BJ (cell line): ENCODE measurements at regions of chr7 and their contacts with region 1.

Region 1: GRCh38 chr7:100889761-100890634 is 483 bp upstream of the UFSP1 start:
- DNase-seq: peak; percentile 51
- H3K4me3 ChIP-seq: peak overlapping the region; percentile 46
- H3K27me3 ChIP-seq: no peaks in the 10 kb centered on the region
- CTCF ChIP-seq: peak; percentile 8; the same call in 1 of the 2 replicates

Region 2: DNA sequence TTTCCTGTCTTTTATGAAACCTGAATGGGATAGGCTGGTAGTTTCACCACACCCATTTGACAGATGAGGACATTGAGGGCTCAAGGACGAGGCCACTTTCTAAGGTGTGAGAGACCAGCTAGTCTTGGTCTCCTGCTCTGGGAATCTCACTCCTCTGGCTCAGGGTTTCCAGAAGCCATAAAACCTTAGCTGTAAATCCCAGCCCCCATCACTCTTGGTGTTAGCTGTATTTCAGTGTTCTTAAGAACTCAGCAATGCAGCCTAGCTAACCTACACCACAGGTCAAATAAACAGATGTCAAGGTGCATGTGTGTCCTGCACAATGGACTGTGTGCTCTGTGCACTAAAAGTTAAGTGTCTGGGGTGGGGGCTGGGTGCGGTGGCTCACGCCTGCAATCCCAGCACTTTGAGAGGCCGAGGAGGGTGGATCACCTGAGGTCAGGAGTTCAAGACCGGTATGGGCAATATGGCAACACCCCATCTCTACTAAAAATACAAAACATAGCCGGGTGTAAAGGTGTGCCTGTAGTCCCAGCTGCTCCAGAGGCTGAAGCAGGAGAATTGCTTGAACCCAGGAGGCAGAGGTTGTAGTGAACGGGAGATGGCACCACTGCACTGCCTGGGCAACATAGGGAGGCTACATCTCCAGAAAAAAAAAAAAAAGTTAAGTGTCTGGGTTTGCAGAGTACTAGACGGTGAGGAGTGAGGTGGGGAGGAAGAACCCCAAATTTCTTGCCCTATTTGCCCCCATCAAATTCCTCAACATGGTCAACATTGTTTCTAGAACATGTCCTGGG is 170.3 kb before region 1 on chr7:
- CTCF ChIA-PET with region 1: no interaction called
- POLR2A ChIA-PET with region 1: no interaction called
- DNase-seq: no peak
- H3K4me3 ChIP-seq: no peak overlapping the region
- H3K27me3 ChIP-seq: peaks cover 38% of the 10 kb centered on the region
- CTCF ChIP-seq: peak; percentile 60

Region 3: GRCh38 chr7:100763556-100764140 is 126.3 kb before region 1 on chr7:
- CTCF ChIA-PET with region 1: no interaction called
- POLR2A ChIA-PET with region 1: no interaction called
- DNase-seq: no peak
- H3K4me3 ChIP-seq: no peak overlapping the region
- H3K27me3 ChIP-seq: peaks cover 15% of the 10 kb centered on the region
- CTCF ChIP-seq: no peak

Region 4: GRCh38 chr7:100874577-100875355 is 15.2 kb before region 1 on chr7 and contains the start of gene SRRT:
- CTCF ChIA-PET with region 1: interaction called, 11 read pairs
- POLR2A ChIA-PET with region 1: interaction called, 13 read pairs
- DNase-seq: peak; percentile 79
- H3K4me3 ChIP-seq: peak within 1 kb of the TSS; percentile 80
- H3K27me3 ChIP-seq: no peaks in the 10 kb centered on the region
- CTCF ChIP-seq: peak; percentile 39
- polyA plus RNA-seq, gene SRRT: 37.4 and 47.1 TPM in 2 replicates

Region 5: GRCh38 chr7:100983451-100984187 is 93.6 kb after region 1 on chr7:
- CTCF ChIA-PET with region 1: no interaction called
- POLR2A ChIA-PET with region 1: no interaction called
- DNase-seq: peak; percentile 71
- H3K4me3 ChIP-seq: no peak overlapping the region
- H3K27me3 ChIP-seq: peaks cover 2% of the 10 kb centered on the region; the same call in 1 of the 2 replicates
- CTCF ChIP-seq: no peak

Region 6: GRCh38 chr7:101015626-101016025 is 125.6 kb after region 1 on chr7:
- CTCF ChIA-PET with region 1: no interaction called
- POLR2A ChIA-PET with region 1: no interaction called
- DNase-seq: no peak
- H3K4me3 ChIP-seq: no peak overlapping the region
- H3K27me3 ChIP-seq: no peaks in the 10 kb centered on the region
- CTCF ChIP-seq: no peak

Region 7: GRCh38 chr7:101058355-101058754 is 168.4 kb after region 1 on chr7:
- CTCF ChIA-PET with region 1: interaction called, 40 read pairs
- POLR2A ChIA-PET with region 1: no interaction called
- DNase-seq: no peak
- H3K4me3 ChIP-seq: no peak overlapping the region
- H3K27me3 ChIP-seq: peaks cover 8% of the 10 kb centered on the region
- CTCF ChIP-seq: no peak

Region 8: GRCh38 chr7:101077303-101078089 is 187.5 kb after region 1 on chr7:
- CTCF ChIA-PET with region 1: interaction called, 16 read pairs
- POLR2A ChIA-PET with region 1: no interaction called
- DNase-seq: no peak
- H3K4me3 ChIP-seq: no peak overlapping the region
- H3K27me3 ChIP-seq: no peaks in the 10 kb centered on the region; the same call in 1 of the 2 replicates
- CTCF ChIP-seq: peak; percentile 98

Region 9: DNA sequence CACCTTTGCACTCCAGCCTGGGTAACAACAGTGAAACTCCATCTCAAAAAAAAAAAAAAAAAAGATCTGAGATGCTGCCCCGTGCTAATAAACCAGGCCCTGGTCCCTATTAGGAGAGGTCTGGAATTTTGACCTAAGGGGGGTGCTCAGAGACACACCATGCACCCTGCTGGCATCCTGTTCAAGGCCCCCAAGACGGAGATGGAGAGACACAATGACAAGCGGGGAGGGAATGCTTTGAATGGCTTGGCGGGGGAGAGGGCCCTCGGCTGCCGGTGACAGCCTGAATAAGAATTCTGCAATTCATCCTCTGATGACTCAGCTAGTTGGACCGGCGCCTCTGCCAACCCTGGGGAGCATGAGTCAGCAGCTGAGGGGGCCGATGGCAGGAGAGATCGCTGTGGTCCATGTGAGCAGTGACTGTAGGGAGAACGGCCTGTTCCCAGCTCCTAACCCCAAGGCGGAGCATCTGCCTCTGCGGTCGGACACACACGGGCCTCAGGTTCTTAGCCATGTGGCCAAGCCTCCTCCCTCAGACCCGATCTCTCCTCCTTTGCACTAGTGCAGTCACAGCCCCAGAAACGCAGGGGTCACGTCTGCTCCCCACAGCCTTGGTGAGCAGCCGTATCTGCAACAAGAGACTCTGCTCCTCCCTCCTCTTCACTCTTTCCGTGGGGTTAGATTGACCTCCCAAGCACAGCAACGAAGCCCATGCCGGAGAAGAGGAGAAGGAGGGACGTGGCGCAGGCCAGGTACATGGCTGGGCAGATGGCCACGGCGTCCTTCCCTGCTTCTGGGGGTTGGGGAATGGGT is 210.2 kb after region 1 on chr7:
- CTCF ChIA-PET with region 1: no interaction called
- POLR2A ChIA-PET with region 1: interaction called, 10 read pairs
- DNase-seq: peak; percentile 96
- H3K4me3 ChIP-seq: no peak overlapping the region
- H3K27me3 ChIP-seq: no peaks in the 10 kb centered on the region
- CTCF ChIP-seq: no peak